Esophagus muscularis mucosa (tissue), 4 donors: ENCODE measurements at regions of chr6 and their contacts with region 1.

Region 1: DNA sequence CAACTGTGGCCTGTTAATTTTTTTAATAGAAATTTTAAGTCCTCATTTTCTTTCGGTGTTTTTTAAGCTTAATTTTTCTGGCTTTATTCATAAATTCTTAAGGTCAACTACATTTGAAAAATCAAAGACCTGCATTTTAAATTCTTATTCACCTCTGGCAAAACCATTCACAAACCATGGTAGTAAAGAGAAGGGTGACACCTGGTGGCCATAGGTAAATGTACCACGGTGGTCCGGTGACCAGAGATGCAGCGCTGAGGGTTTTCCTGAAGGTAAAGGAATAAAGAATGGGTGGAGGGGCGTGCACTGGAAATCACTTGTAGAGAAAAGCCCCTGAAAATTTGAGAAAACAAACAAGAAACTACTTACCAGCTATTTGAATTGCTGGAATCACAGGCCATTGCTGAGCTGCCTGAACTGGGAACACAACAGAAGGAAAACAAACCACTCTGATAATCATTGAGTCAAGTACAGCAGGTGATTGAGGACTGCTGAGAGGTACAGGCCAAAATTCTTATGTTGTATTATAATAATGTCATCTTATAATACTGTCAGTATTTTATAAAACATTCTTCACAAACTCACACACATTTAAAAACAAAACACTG is 10.1 kb downstream of the HFE start:
- DNase-seq: no peak
- H3K4me3 ChIP-seq: no peak overlapping the region
- H3K27ac ChIP-seq: no peak overlapping the region
- H3K4me1 ChIP-seq: peaks cover 0 to 6% (median 0%) of the 10 kb centered on the region in 4 donors
- H3K27me3 ChIP-seq: no peaks in the 10 kb centered on the region
- CTCF ChIP-seq: peak; percentile 82 to 92 (median 85)
- EP300 ChIP-seq: no peak
- POLR2A ChIP-seq: no peak

Region 2: GRCh38 chr6:25992413-25993037 is 104.8 kb before region 1 on chr6:
- intact Hi-C with region 1: no loop called
- DNase-seq: peak; percentile 98
- H3K4me3 ChIP-seq: peak overlapping the region; percentile 63 to 75 (median 68)
- H3K27ac ChIP-seq: peak overlapping the region; percentile 88 to 93 (median 90)
- H3K4me1 ChIP-seq: peaks cover 11 to 26% (median 20%) of the 10 kb centered on the region in 4 donors
- H3K27me3 ChIP-seq: no peaks in the 10 kb centered on the region
- CTCF ChIP-seq: peak; percentile 97 to 99 (median 97)
- EP300 ChIP-seq: no peak
- POLR2A ChIP-seq: peak; percentile 80

Region 3: GRCh38 chr6:26065952-26066380 is 31.4 kb before region 1 on chr6:
- intact Hi-C with region 1: loop called (anchors 2 kb)
- DNase-seq: no peak
- H3K4me3 ChIP-seq: no peak overlapping the region
- H3K27ac ChIP-seq: no peak overlapping the region
- H3K4me1 ChIP-seq: peaks cover 0 to 12% (median 6%) of the 10 kb centered on the region in 4 donors
- H3K27me3 ChIP-seq: no peaks in the 10 kb centered on the region
- CTCF ChIP-seq: peak; percentile 85 to 94 (median 85)
- EP300 ChIP-seq: no peak
- POLR2A ChIP-seq: no peak

Region 4: DNA sequence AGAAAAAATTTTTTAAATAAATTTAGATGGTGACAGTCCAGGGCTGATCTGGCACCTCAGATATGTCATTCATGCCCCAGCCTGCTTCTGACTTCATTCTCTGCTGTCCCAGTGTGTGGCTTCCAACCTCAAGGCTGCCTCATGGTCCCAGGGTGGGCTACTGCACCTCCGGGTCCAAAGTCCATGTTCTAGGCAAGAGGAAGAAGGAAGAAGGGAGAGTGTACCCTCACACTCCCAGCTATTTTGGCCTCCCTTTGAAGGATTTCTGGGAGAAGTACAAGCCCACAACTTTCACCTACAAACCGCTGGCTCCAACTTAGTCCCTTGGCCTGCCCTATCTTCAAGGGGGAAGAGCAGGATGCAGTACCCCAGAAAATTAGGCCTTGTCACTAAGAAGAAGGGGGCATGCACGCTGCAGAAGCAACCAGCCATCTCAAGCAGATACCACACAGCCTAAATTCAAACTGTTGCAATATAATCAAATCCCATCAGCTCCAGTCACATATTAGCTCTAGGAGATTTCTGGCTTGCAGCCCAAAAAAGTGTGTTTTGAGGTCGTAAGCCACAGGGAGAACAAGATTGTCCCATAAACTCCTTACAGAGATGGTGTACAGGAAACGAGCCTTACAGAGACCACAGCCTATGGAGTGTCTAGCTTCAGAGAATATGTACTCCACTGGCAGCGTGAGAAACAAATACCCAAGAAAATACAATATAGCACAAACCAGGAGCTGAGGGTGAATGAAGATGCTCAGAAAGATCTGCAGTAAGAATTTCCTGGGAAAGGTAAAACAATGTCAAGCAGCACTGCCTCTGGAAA is 266.7 kb after region 1 on chr6:
- intact Hi-C with region 1: no loop called
- DNase-seq: no peak
- H3K4me3 ChIP-seq: peak overlapping the region; percentile 61 to 77 (median 68)
- H3K27ac ChIP-seq: peak overlapping the region; percentile 82 to 86 (median 84)
- H3K4me1 ChIP-seq: peaks cover 10 to 20% (median 16%) of the 10 kb centered on the region in 4 donors
- H3K27me3 ChIP-seq: no peaks in the 10 kb centered on the region
- CTCF ChIP-seq: no peak
- EP300 ChIP-seq: no peak
- POLR2A ChIP-seq: no peak